ENCODE measurements at regions of chr15 and their contacts with region 1.

Region 1: DNA sequence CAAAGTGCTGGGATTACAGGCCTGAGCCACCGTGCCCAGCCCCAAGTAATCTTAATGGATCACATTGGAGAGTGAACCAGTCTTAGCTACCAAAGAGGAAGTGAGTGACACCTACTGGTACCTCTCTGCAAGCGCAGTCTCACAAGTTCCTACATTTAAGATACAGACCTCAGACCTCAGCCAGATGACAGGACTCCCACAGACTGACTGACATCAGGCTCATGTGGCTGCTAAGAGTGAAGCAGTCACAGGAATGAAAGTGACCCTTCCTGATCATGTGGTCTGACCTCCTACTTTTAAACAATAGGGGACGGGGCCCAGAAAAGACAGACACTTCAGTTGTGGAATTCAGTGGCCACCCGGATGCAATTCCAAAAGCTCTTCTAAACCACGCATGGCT is 36.3 kb upstream of the GNB5 start:
- DNase-seq: peak; percentile 79
- CTCF ChIP-seq: peak; percentile 83

Region 2: DNA sequence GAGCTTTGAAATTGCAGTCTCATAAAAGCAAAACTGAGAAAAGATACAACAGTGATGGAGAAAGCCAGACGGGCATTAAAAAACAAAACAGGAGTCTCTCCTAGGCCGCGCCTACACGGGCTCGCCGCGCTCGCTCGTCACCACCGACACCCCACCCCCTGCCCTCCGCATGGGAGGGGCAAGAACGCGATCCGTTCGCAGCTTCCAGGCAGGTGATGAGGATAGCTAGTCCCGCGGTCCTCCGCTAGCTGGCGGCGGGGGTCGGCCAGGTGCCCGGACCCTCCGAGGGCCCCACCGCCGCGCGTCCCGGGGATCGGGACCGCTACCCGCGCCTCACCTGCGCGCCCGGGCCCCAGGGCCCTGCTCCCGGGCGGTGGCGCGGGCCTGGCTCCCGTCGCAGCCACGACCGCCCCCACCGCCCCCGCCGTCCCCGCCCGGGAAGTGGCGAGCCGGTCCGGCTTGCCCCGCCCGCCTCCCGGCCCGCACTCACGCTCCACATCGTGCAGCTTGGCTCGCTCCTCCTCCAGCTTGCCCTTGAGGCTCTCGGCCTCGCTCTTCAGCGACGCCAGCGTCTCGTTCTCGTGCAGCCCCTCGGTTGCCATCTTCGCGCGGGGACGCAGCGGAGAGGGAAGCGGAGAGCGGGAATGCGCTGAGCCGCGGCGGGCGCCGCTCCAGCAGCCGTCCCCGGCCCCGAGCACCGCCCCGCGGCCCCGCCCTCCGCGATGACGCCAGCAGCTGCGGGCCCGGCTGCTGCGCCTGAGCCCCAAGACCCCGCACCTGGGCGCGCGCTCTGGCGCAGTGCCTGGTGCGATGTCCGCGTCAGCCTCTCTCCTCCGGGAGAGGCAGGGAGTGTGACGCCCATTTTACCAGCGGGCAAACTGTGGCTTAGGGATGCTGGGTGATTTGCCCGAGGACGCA is 47.9 kb before region 1 on chr15:
- CTCF ChIA-PET with region 1: interaction called, 17 read pairs
- POLR2A ChIA-PET with region 1: no interaction called
- DNase-seq: peak; percentile 91
- CTCF ChIP-seq: no peak

Region 3: GRCh38 chr15:52217186-52217585 is 10.3 kb before region 1 on chr15:
- CTCF ChIA-PET with region 1: interaction called, 64 read pairs
- POLR2A ChIA-PET with region 1: no interaction called
- DNase-seq: peak; percentile 30
- CTCF ChIP-seq: peak; percentile 39

Region 4: DNA sequence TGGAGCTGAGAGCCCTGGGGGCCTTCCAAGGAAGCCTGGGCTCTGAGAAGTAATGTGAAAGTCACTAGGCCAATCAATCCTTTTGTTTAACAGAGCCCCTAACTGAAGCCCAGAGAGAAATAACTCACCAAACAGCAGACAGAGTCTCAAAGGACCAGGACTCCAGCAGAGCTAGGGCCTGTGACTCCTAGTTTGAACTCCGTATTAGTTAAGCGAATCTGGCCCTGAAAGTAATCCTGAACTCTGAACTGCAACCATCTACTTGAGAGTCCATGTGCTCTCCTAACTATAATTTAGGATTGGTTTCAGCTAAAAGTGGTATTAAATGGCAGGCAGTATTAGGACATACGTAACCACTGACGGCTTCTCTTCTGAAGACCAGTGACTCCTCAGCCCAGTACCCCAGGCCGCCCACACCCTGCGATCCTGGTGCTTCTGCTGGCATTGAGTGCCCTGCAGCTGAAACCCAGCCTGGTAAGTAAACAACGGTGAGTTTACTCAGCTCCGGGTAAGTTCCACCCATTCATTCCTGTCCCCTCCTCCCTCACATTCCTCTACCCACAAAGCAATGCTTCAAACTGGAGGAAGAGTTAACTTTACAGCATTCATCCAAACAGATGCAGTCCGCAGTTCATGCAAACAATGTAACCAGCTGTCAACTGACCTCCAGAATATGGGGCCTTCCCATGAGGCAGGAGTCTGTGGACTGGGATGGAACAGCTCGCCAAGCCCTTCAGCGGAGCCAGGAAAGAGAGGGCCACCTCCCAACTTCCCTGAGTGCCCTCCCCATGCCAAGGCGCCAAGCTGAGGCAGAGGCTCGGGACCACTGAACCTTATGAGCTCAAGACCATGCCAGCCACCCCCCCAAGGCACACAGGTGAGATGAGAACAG is 60.8 kb after region 1 on chr15:
- CTCF ChIA-PET with region 1: no interaction called
- POLR2A ChIA-PET with region 1: no interaction called
- DNase-seq: no peak
- CTCF ChIP-seq: no peak

Measured in GM10248 (cell line).